H1 (cell line): ENCODE measurements at regions of chr21 and their contacts with region 1.

Region 1: GRCh38 chr21:37758982-37759381 is 157.3 kb downstream of the KCNJ6 start:
- DNase-seq: peak; percentile 38 to 84
- H3K4me3 ChIP-seq: no peak overlapping the region
- H3K27ac ChIP-seq: no peak overlapping the region
- H3K4me1 ChIP-seq: peaks cover 3 to 5% (median 4%) of the 10 kb centered on the region in 4 experiments; a peak in 4 of 7 replicates
- H3K27me3 ChIP-seq: no peaks in the 10 kb centered on the region
- CTCF ChIP-seq: peak; percentile 92 to 97 (median 96)
- EP300 ChIP-seq: no peak
- POLR2A ChIP-seq: no peak
- RAD21 ChIP-seq: peak; percentile 98

Region 2: GRCh38 chr21:37563641-37564340 is 195.2 kb before region 1 on chr21:
- CTCF ChIA-PET with region 1: no interaction called
- POLR2A ChIA-PET with region 1: no interaction called
- DNase-seq: peak; percentile 85 to 87
- H3K4me3 ChIP-seq: peak overlapping the region in 3 of 4 experiments; percentile 10 to 47 (median 17); a peak in 5 of 8 replicates
- H3K27ac ChIP-seq: no peak overlapping the region
- H3K4me1 ChIP-seq: peaks cover 4 to 16% (median 12%) of the 10 kb centered on the region in 4 experiments
- H3K27me3 ChIP-seq: peaks cover 0 to 7% (median 3%) of the 10 kb centered on the region in 4 experiments; a peak in 5 of 7 replicates
- CTCF ChIP-seq: peak in 1 of 3 experiments; percentile 12; a peak in 1 of 4 replicates
- EP300 ChIP-seq: no peak
- POLR2A ChIP-seq: peak in 1 of 2 experiments; percentile 53; a peak in 1 of 3 replicates
- RAD21 ChIP-seq: no peak; a peak in 1 of 4 replicates

Region 3: DNA sequence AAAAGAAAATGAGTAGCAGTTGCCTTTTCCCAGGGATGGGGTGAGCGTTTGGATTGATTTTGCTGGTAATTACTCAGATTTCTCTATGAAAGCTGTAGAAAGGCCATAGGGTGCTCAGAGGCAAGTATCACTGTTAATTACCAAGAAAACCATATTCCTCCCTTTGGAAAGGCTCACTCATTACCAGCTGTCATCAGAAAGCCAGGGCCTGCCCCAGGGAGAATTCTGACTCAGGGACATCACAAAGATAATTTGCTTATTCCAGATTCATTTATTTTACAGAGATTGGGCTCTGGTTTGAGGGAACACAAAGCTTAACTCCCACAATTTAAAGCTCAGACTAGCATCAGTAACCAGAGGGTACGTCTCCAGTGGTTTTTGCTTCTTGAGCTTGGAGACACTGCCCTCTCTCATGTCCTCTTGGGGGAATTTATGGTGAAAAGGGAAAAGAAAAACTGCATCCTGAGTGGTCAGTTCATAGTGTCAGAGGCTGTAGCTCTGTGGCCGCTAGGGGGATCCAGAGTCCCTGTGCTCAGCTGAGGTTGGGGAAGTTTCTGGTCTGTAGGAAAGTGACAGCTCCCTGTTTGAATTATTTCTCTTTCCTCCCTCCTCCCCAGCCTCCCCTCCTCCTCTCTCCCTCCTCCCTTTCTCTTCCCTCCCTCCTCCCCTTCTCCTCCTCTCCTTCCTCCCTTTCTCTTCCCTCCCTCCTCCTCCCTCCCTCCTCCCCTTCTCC is 47.0 kb before region 1 on chr21:
- CTCF ChIA-PET with region 1: interaction called, 23 read pairs
- POLR2A ChIA-PET with region 1: no interaction called
- DNase-seq: peak; percentile 41 to 77
- H3K4me3 ChIP-seq: no peak overlapping the region
- H3K27ac ChIP-seq: no peak overlapping the region
- H3K4me1 ChIP-seq: peaks cover 0 to 5% (median 0%) of the 10 kb centered on the region in 4 experiments; a peak in 2 of 7 replicates
- H3K27me3 ChIP-seq: no peaks in the 10 kb centered on the region
- CTCF ChIP-seq: peak; percentile 85 to 93 (median 86)
- EP300 ChIP-seq: no peak
- POLR2A ChIP-seq: no peak
- RAD21 ChIP-seq: peak; percentile 89 to 92

Region 4: DNA sequence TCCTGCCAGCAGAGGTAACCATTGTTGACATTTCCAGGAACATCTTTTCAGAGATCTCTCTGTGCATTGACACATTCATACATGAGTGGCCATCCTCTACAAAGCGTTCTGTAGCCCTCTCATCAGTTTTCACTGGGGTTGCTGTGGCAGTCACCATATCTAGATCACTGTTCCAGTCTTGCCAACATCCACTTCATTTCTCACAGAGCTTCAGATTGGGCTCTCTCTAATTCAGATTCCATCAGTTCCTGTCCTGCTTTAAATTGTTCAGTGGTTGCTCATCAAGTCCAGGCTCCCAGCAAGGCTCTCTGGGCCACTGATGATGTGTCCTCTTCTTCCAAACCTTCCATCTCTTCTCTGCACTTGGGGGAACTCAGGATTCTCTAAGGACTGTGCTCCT is 16.4 kb before region 1 on chr21:
- CTCF ChIA-PET with region 1: interaction called, 19 read pairs
- POLR2A ChIA-PET with region 1: no interaction called
- DNase-seq: no peak
- H3K4me3 ChIP-seq: no peak overlapping the region
- H3K27ac ChIP-seq: no peak overlapping the region
- H3K4me1 ChIP-seq: peaks cover 0 to under 1% (median 0%) of the 10 kb centered on the region in 4 experiments; a peak in 1 of 7 replicates
- H3K27me3 ChIP-seq: no peaks in the 10 kb centered on the region
- CTCF ChIP-seq: no peak
- EP300 ChIP-seq: no peak
- POLR2A ChIP-seq: no peak
- RAD21 ChIP-seq: no peak

Region 5: GRCh38 chr21:37916310-37917051 is 157.5 kb after region 1 on chr21 and contains the start of gene KCNJ6:
- CTCF ChIA-PET with region 1: interaction called, 54 read pairs
- POLR2A ChIA-PET with region 1: no interaction called
- DNase-seq: peak in 1 of 2 experiments; percentile 91
- H3K4me3 ChIP-seq: peak within 1 kb of the TSS; percentile 64 to 76 (median 66)
- H3K27ac ChIP-seq: no peak within 1 kb of the TSS
- H3K4me1 ChIP-seq: peaks cover 3 to 16% (median 8%) of the 10 kb centered on the region in 4 experiments; a peak in 6 of 7 replicates
- H3K27me3 ChIP-seq: peaks cover 9 to 17% (median 16%) of the 10 kb centered on the region in 4 experiments
- CTCF ChIP-seq: peak; percentile 77 to 92 (median 83)
- EP300 ChIP-seq: no peak
- POLR2A ChIP-seq: no peak
- RAD21 ChIP-seq: peak; percentile 83
- total RNA-seq, gene KCNJ6: 0.78 and 1.2 TPM in 2 replicates